Caco-2 (cell line): ENCODE measurements at regions of chr2 and their contacts with region 1.

Region 1: DNA sequence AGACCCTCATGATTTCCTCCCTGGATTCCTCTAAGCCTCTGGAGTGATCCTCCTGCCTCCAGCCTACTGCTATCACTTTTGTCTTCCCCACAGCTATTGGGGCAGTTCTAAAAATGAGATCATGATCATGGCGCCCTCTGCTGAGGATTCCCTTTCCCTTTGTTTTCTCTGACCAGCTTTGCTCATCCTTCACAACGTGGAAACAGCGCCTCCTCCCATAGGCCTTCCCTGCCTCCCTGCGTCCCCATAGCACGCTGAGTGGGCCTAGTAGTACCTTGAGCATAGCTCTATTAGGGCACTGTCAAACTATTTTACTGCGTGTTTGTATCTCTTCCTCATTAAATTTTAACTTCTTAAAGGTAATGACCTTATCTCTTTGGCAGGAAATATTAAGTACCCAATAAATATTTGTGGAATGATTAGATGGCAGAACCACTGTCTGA is 207.0 kb upstream of the FANCL start:
- DNase-seq: peak; percentile 77 to 78
- H3K4me3 ChIP-seq: no peak overlapping the region
- H3K4me3 Mint-ChIP-seq: no peak overlapping the region
- H3K27ac Mint-ChIP-seq: no peak overlapping the region
- H3K4me1 ChIP-seq: no peaks in the 10 kb centered on the region
- H3K4me1 Mint-ChIP-seq: no peaks in the 10 kb centered on the region
- H3K27me3 ChIP-seq: no peaks in the 10 kb centered on the region
- H3K27me3 Mint-ChIP-seq: peaks cover 4% of the 10 kb centered on the region
- CTCF ChIP-seq: peak in 1 of 2 experiments; percentile 73

Region 2: DNA sequence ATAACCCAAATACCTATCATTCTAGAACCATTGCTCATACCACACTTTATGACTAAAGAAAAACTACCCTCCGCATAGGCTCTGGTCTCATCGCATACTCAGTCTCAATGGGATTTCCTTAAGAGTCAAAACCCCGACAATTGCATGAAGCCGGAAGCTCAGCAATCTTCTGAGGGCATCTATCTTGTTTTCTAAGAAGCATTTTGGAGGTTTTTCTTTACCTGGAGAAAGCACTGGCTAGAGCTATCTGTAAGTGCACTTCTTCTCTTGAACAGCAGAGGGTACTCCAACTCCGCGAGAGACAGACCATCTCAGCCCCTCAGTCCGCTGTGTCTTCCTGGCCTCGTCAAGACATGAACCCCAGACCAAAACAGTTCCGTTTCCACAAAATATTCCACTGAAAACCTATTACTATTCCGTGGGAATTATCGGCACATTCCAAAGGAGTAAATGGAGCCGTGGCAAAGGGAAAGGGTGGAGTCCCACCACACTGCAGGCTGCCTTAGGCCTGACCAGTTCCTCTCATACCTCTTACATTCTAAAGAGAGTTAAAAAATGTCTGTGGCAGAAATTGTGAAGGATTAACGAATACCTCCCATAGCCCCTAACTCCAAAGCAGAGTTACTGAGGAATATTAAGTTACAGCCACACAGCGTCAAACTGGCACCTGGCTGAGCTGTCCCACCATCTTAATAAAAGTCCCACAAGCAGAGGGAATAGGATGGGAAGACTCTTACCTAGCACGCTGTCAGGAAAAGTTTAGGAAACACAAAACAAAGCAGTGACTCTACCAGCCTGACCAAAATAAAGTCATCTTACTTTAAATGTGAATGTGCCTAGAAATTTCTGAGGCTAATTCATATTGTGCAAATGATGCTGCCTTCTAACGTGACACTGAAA is 727.1 kb before region 1 on chr2:
- CTCF ChIA-PET with region 1: interaction called, 6 read pairs
- POLR2A ChIA-PET with region 1: no interaction called
- intact Hi-C with region 1: loop called (anchors 1 kb)
- DNase-seq: peak; percentile 60 to 64
- H3K4me3 ChIP-seq: no peak overlapping the region
- H3K4me3 Mint-ChIP-seq: peak overlapping the region; percentile 56
- H3K27ac Mint-ChIP-seq: no peak overlapping the region
- H3K4me1 ChIP-seq: no peaks in the 10 kb centered on the region
- H3K4me1 Mint-ChIP-seq: no peaks in the 10 kb centered on the region
- H3K27me3 ChIP-seq: no peaks in the 10 kb centered on the region
- H3K27me3 Mint-ChIP-seq: no peaks in the 10 kb centered on the region
- CTCF ChIP-seq: peak; percentile 83

Region 3: GRCh38 chr2:58131191-58132011 is 316.7 kb before region 1 on chr2:
- CTCF ChIA-PET with region 1: no interaction called
- POLR2A ChIA-PET with region 1: no interaction called
- intact Hi-C with region 1: loop called (anchors 1 kb)
- DNase-seq: no peak
- H3K4me3 ChIP-seq: no peak overlapping the region
- H3K4me3 Mint-ChIP-seq: no peak overlapping the region
- H3K27ac Mint-ChIP-seq: no peak overlapping the region
- H3K4me1 ChIP-seq: no peaks in the 10 kb centered on the region
- H3K4me1 Mint-ChIP-seq: no peaks in the 10 kb centered on the region
- H3K27me3 ChIP-seq: no peaks in the 10 kb centered on the region
- H3K27me3 Mint-ChIP-seq: no peaks in the 10 kb centered on the region
- CTCF ChIP-seq: no peak

Region 4: DNA sequence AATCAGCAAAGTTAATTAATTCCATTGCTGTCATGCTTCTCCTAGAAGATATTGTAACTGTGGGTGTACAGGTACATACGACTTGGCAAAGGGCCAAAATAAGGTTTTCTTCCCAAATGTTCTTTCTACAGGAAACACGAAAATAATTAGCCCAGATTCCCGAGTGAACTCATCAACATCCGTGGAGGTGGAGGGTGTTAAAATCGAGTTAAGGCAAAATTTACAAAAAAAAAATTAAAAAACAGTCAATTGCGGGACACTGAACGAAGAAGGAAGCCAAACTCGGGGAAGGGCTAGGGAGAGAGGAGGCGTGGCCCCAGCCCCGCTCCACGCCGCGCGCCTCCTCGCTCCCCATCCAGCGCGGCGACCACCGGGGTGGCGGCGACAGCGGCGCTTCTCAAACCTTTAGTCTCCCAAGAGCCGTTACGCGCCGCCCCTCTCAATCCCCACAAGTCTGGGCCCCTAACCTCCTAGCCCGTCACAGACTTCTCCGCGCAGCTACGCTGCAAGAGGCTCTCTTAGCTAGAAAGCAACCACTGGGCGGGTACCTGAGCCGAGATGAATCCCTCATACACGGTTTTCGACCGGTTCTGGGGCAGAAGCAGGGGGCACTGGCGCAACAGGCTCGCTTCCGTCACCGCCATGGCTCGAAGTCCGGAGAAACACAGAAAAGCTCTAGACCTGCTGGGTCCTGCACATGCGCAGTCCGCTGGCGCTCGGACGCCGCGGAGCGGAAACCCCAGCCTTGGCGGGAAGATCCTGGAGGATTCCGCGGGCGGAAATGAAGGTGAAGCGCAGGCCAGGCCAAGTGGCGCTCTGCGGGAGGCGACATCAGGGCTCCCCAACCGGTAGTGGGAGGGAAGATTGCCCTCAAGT is 207.2 kb before region 1 on chr2 and contains the start of gene FANCL:
- CTCF ChIA-PET with region 1: interaction called, 5 read pairs
- POLR2A ChIA-PET with region 1: no interaction called
- intact Hi-C with region 1: loop called (anchors 10 kb)
- DNase-seq: peak; percentile 95 to 96
- H3K4me3 ChIP-seq: peak within 1 kb of the TSS; percentile 79
- H3K4me3 Mint-ChIP-seq: peak within 1 kb of the TSS; percentile 99
- H3K27ac Mint-ChIP-seq: peak within 1 kb of the TSS; percentile 99
- H3K4me1 ChIP-seq: peaks cover 8% of the 10 kb centered on the region
- H3K4me1 Mint-ChIP-seq: no peaks in the 10 kb centered on the region
- H3K27me3 ChIP-seq: no peaks in the 10 kb centered on the region
- H3K27me3 Mint-ChIP-seq: peaks cover 7% of the 10 kb centered on the region
- CTCF ChIP-seq: no peak
- total RNA-seq, gene FANCL: 30.2 and 34.3 TPM in 2 replicates

Region 5: GRCh38 chr2:58357521-58357920 is 90.6 kb before region 1 on chr2:
- CTCF ChIA-PET with region 1: interaction called, 5 read pairs
- POLR2A ChIA-PET with region 1: no interaction called
- intact Hi-C with region 1: loop called (anchors 1 kb)
- DNase-seq: no peak
- H3K4me3 ChIP-seq: no peak overlapping the region
- H3K4me3 Mint-ChIP-seq: no peak overlapping the region
- H3K27ac Mint-ChIP-seq: no peak overlapping the region
- H3K4me1 ChIP-seq: no peaks in the 10 kb centered on the region
- H3K4me1 Mint-ChIP-seq: no peaks in the 10 kb centered on the region
- H3K27me3 ChIP-seq: no peaks in the 10 kb centered on the region; the same call in 1 of the 2 replicates
- H3K27me3 Mint-ChIP-seq: peaks cover 2% of the 10 kb centered on the region
- CTCF ChIP-seq: no peak

Region 6: GRCh38 chr2:58571181-58571852 is 123.2 kb after region 1 on chr2:
- CTCF ChIA-PET with region 1: interaction called, 12 read pairs
- POLR2A ChIA-PET with region 1: no interaction called
- intact Hi-C with region 1: no loop called
- DNase-seq: peak; percentile 63 to 70
- H3K4me3 ChIP-seq: no peak overlapping the region
- H3K4me3 Mint-ChIP-seq: no peak overlapping the region
- H3K27ac Mint-ChIP-seq: no peak overlapping the region
- H3K4me1 ChIP-seq: peaks cover 9% of the 10 kb centered on the region; the same call in 1 of the 2 replicates
- H3K4me1 Mint-ChIP-seq: no peaks in the 10 kb centered on the region
- H3K27me3 ChIP-seq: no peaks in the 10 kb centered on the region
- H3K27me3 Mint-ChIP-seq: peaks cover 6% of the 10 kb centered on the region
- CTCF ChIP-seq: peak; percentile 56 to 76